ENCODE measurements at regions of chr9 and their contacts with region 1.

Region 1: DNA sequence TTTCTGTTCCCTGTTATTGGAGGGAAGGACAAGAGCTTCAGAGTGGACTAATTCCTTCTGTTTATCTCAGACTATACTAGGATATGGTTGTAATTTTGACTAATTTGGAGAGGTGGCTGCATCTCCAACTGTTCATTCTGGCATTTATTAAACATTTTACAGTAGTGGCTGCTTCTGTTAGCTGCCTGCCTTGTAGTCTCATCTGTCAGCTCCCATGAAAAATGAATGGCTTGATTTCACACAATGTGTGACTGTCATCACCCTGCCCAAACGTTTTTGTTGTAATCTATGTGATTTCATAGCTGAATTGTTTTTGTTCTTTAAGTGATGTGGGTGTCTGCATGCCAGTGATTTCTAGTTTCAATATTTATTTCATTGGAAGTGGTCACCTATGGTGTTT is 459.4 kb upstream of the PTPRD start:
- DNase-seq: no peak
- ATAC-seq: no peak
- H3K4me3 Mint-ChIP-seq: no peak overlapping the region
- H3K27ac Mint-ChIP-seq: no peak overlapping the region
- H3K4me1 Mint-ChIP-seq: no peaks in the 10 kb centered on the region
- H3K27me3 Mint-ChIP-seq: no peaks in the 10 kb centered on the region

Region 2: GRCh38 chr9:11135851-11136250 is 63.7 kb after region 1 on chr9:
- CTCF ChIA-PET with region 1: no interaction called
- POLR2A ChIA-PET with region 1: no interaction called
- intact Hi-C with region 1: loop called in 1 of 2 experiments (anchors 10 kb)
- DNase-seq: no peak
- ATAC-seq: no peak
- H3K4me3 Mint-ChIP-seq: no peak overlapping the region
- H3K27ac Mint-ChIP-seq: no peak overlapping the region
- H3K4me1 Mint-ChIP-seq: no peaks in the 10 kb centered on the region
- H3K27me3 Mint-ChIP-seq: no peaks in the 10 kb centered on the region